ENCODE measurements at regions of chr12 and their contacts with region 1.

Region 1: DNA sequence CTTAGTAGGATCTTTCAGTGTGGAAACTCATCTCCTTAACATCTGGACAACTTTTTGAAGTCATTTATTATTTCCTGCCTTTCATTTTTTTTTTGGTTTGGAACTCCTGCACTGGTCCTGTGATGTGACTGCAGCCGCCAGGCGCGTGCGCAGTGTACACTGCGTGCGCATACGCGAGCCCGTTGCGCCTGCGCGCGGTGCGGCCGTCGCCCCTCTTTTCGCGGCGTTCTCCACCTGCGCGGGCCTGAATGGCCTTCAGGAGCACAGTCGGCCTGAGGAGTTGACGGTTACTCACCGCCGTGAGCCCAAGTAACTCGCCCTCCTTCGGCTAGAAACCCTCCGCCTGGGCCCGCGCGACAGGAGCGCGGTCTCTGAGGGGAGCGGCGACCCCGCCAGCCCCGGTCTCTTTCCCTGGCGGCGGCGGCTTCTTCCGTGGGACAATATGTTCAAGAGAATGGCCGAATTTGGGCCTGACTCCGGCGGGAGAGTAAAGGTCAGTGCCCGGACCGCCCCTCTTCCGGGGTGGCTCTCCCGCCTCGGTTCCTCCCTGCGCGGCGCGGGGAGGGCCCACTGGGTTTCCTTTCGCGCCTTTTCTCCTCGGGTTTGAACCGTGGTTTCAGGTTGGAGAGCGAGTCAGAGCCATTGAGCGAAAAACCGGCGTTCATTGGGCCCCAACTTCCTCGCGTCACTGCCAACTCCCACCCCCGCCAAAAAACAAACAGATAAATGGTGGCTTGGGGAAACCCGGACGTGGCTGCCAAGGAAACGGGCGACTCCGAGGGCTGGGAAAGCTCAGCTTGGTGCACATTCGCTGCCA is at the start of gene YEATS4:
- DNase-seq: peak; percentile 97 to 98
- H3K4me3 ChIP-seq: peak within 1 kb of the TSS; percentile 61
- H3K4me3 Mint-ChIP-seq: peak within 1 kb of the TSS; percentile 90
- H3K27ac Mint-ChIP-seq: peak within 1 kb of the TSS; percentile 96
- H3K4me1 ChIP-seq: peaks cover 22% of the 10 kb centered on the region
- H3K4me1 Mint-ChIP-seq: peaks cover 34% of the 10 kb centered on the region
- H3K27me3 ChIP-seq: no peaks in the 10 kb centered on the region
- H3K27me3 Mint-ChIP-seq: no peaks in the 10 kb centered on the region
- CTCF ChIP-seq: no peak
- total RNA-seq, gene YEATS4: 40.9 and 42.6 TPM in 2 replicates

Region 2: GRCh38 chr12:69290545-69291277 is 69.0 kb before region 1 on chr12:
- CTCF ChIA-PET with region 1: no interaction called
- POLR2A ChIA-PET with region 1: no interaction called
- intact Hi-C with region 1: loop called (anchors 2 kb)
- DNase-seq: peak; percentile 82 to 85
- H3K4me3 ChIP-seq: no peak overlapping the region
- H3K4me3 Mint-ChIP-seq: no peak overlapping the region
- H3K27ac Mint-ChIP-seq: no peak overlapping the region
- H3K4me1 ChIP-seq: no peaks in the 10 kb centered on the region
- H3K4me1 Mint-ChIP-seq: peaks cover 11% of the 10 kb centered on the region
- H3K27me3 ChIP-seq: no peaks in the 10 kb centered on the region
- H3K27me3 Mint-ChIP-seq: no peaks in the 10 kb centered on the region
- CTCF ChIP-seq: peak; percentile 91 to 96

Region 3: DNA sequence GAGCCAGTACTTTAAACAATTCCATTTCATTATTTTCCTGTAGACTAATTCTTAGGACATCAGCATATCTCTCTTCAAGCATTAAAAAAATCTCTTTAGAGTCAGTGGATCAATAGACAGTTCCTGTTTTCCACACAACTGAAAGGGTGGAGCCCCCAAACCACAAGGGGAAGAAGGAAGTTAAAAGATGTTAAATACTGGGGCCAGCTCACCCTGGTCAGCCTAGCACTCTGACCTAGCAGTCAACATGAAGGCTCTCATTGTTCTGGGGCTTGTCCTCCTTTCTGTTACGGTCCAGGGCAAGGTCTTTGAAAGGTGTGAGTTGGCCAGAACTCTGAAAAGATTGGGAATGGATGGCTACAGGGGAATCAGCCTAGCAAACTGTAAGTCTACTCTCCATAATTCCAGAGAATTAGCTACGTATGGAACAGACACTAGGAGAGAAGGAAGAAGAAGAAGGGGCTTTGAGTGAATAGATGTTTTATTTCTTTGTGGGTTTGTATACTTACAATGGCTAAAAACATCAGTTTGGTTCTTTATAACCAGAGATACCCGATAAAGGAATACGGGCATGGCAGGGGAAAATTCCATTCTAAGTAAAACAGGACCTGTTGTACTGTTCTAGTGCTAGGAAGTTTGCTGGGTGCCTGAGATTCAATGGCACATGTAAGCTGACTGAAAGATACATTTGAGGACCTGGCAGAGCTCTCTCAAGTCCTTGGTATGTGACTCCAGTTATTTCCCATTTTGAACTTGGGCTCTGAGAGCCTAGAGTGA is 11.4 kb before region 1 on chr12 and contains the start of gene LYZ:
- CTCF ChIA-PET with region 1: interaction called, 13 read pairs
- POLR2A ChIA-PET with region 1: no interaction called
- intact Hi-C with region 1: no loop called
- DNase-seq: no peak
- H3K4me3 ChIP-seq: no peak within 1 kb of the TSS
- H3K4me3 Mint-ChIP-seq: no peak within 1 kb of the TSS
- H3K27ac Mint-ChIP-seq: peak within 1 kb of the TSS; percentile 16
- H3K4me1 ChIP-seq: peaks cover 32% of the 10 kb centered on the region
- H3K4me1 Mint-ChIP-seq: peaks cover 9% of the 10 kb centered on the region
- H3K27me3 ChIP-seq: no peaks in the 10 kb centered on the region
- H3K27me3 Mint-ChIP-seq: no peaks in the 10 kb centered on the region
- CTCF ChIP-seq: no peak
- total RNA-seq, gene LYZ: 16.8 and 16.9 TPM in 2 replicates

Region 4: DNA sequence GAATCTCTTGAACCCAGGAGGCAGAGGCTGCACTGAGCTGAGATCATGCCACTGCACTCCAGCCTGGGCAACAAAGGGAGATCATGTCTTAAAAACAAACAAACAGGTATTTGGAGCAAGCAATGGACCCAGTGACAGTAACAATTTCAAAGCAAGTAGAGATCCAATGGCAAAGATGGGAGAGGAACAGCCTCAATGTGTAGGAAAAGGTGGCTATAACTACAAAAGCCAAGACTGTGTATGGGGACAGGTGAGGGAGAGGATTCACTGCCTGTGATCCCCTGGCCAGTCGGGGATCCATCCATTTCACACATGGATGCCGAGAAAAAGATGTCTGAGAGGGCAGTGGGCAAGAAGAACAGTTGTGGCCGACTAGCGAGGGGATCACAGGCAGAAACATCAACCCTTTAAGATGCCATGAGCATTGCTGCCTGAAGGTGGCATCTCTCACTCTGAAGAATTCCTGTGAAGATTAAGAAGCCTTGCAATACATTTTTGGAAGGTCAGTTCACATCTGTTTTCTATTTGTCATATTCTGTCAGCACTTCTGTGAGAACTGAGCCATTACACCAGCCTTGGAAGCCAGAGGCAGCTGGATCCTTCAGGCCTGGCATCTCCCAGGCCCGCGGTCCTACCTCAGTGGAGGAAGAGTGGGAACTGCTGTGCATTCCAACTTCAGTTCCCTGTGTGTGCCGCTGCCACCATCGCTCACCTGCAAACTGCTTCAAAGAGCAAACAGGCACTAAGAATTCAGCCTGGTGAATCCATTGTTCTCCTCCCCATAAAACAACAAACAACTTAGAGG is 55.9 kb after region 1 on chr12:
- CTCF ChIA-PET with region 1: interaction called, 10 read pairs
- POLR2A ChIA-PET with region 1: no interaction called
- intact Hi-C with region 1: loop called (anchors 1 kb)
- DNase-seq: peak; percentile 85 to 89
- H3K4me3 ChIP-seq: peak overlapping the region; percentile 23
- H3K4me3 Mint-ChIP-seq: peak overlapping the region; percentile 78
- H3K27ac Mint-ChIP-seq: peak overlapping the region; percentile 99
- H3K4me1 ChIP-seq: peaks cover 56% of the 10 kb centered on the region
- H3K4me1 Mint-ChIP-seq: peaks cover 64% of the 10 kb centered on the region
- H3K27me3 ChIP-seq: no peaks in the 10 kb centered on the region
- H3K27me3 Mint-ChIP-seq: no peaks in the 10 kb centered on the region
- CTCF ChIP-seq: peak; percentile 82 to 88

Region 5: GRCh38 chr12:69470189-69471075 is 110.7 kb after region 1 on chr12 and contains the start of gene FRS2:
- CTCF ChIA-PET with region 1: no interaction called
- POLR2A ChIA-PET with region 1: interaction called, 9 read pairs
- intact Hi-C with region 1: loop called (anchors 5 kb)
- DNase-seq: peak; percentile 95
- H3K4me3 ChIP-seq: peak within 1 kb of the TSS; percentile 59
- H3K4me3 Mint-ChIP-seq: peak within 1 kb of the TSS; percentile 86
- H3K27ac Mint-ChIP-seq: peak within 1 kb of the TSS; percentile 95
- H3K4me1 ChIP-seq: peaks cover 41% of the 10 kb centered on the region
- H3K4me1 Mint-ChIP-seq: peaks cover 67% of the 10 kb centered on the region
- H3K27me3 ChIP-seq: no peaks in the 10 kb centered on the region
- H3K27me3 Mint-ChIP-seq: no peaks in the 10 kb centered on the region
- CTCF ChIP-seq: peak; percentile 16 to 37
- total RNA-seq, gene FRS2: 82.3 and 86.5 TPM in 2 replicates

Region 6: GRCh38 chr12:69585189-69586062 is 225.7 kb after region 1 on chr12 and contains the start of gene CCT2:
- CTCF ChIA-PET with region 1: no interaction called
- POLR2A ChIA-PET with region 1: no interaction called
- intact Hi-C with region 1: loop called (anchors 1 kb)
- DNase-seq: peak; percentile 96 to 98
- H3K4me3 ChIP-seq: peak within 1 kb of the TSS; percentile 97
- H3K4me3 Mint-ChIP-seq: peak within 1 kb of the TSS; percentile 97
- H3K27ac Mint-ChIP-seq: peak within 1 kb of the TSS; percentile 96
- H3K4me1 ChIP-seq: no peaks in the 10 kb centered on the region
- H3K4me1 Mint-ChIP-seq: peaks cover 5% of the 10 kb centered on the region
- H3K27me3 ChIP-seq: no peaks in the 10 kb centered on the region
- H3K27me3 Mint-ChIP-seq: no peaks in the 10 kb centered on the region
- CTCF ChIP-seq: peak; percentile 31 to 48
- total RNA-seq, gene CCT2: 321 and 341 TPM in 2 replicates

Region 7: GRCh38 chr12:69639400-69640016 is 279.8 kb after region 1 on chr12:
- CTCF ChIA-PET with region 1: interaction called, 18 read pairs
- POLR2A ChIA-PET with region 1: no interaction called
- intact Hi-C with region 1: loop called (anchors 1 kb)
- DNase-seq: peak; percentile 70 to 75
- H3K4me3 ChIP-seq: no peak overlapping the region
- H3K4me3 Mint-ChIP-seq: no peak overlapping the region
- H3K27ac Mint-ChIP-seq: no peak overlapping the region
- H3K4me1 ChIP-seq: no peaks in the 10 kb centered on the region
- H3K4me1 Mint-ChIP-seq: no peaks in the 10 kb centered on the region
- H3K27me3 ChIP-seq: no peaks in the 10 kb centered on the region
- H3K27me3 Mint-ChIP-seq: no peaks in the 10 kb centered on the region
- CTCF ChIP-seq: peak; percentile 81 to 89